ENCODE measurements at regions of chr1 and their contacts with region 1.

Region 1: DNA sequence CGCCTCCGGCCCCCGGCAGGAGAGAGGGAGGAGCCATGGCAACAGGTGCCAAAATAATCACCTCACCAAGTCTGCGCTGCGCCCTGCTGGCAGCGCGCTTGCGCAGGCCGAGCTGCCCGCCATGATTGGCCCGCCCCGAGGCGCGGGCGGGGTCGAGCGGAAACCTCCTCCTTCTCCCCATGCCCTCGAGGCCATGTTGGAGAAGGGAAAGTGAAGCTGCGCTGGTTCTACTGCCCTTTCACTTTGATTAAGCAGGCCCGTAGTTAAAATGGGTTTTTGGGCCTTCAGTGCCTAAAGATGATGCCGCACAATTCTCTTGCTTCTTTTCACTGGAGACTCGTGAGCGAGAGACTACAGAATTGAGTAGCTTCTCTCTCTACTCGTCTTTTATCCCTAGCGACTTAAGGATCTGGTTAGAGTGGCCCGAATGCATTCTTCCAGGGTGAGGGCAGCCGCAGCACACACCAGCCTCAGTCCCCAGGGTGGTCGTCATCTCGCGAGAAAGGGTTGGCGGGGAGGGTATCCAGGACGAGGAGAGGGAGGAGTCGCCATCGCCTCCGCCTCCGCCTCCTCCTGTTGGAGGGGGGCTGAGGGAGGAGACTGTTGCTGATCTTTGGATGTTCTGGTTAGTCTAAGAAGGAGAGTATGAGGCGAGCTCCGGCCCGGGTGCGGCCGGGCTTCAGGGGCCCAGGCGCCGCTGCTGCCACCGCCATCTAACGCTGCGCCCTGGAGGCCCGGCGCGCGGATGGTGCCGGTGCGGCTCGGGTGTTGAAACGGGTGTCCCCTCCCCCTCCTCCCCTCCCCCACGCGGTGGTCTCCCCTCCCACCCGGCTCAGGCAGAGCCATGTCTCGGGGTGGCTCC is at the start of gene DCAF6:
- DNase-seq: peak; percentile 100
- H3K4me3 Mint-ChIP-seq: peak within 1 kb of the TSS; percentile 81
- H3K27ac Mint-ChIP-seq: peak within 1 kb of the TSS; percentile 85
- H3K4me1 Mint-ChIP-seq: peaks cover 18% of the 10 kb centered on the region
- H3K27me3 Mint-ChIP-seq: no peaks in the 10 kb centered on the region
- CTCF ChIP-seq: no peak
- total RNA-seq, gene DCAF6: 57.2 and 60.8 TPM in 2 replicates

Region 2: DNA sequence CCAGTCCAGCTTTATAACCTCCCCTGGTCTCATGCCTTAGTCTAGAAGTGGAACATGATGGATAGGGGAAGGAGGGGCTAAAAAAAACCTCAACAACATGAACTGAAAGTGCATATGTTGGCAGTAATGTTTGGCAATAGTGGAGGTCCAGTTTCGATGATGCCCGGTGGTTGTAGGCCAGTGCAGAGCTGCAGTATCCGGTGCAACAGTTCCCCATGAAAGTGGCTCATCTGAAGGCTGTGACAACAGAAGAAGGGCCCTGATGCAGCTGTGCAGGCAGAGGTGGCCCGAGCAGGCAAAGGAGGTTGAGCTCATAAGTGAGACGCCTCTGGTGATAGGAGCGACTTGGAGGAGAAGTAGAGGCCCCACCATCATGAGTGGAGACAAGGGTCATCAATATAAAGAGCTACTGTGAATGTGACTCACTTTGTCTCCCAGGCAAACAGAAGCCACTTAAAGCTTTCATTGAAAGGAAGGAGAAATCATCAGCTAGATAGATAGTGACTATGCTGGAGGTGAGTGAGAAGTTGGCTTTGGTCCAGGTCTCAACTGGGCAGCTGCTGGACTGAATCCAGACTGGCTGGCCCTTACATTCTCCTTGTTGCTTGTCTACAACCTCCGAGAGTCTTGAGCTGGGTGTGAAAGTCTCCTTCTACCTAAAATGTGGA is 372.6 kb before region 1 on chr1:
- CTCF ChIA-PET with region 1: no interaction called
- POLR2A ChIA-PET with region 1: interaction called, 16 read pairs
- intact Hi-C with region 1: no loop called
- DNase-seq: peak; percentile 79
- H3K4me3 Mint-ChIP-seq: peak overlapping the region; percentile 64
- H3K27ac Mint-ChIP-seq: peak overlapping the region; percentile 85
- H3K4me1 Mint-ChIP-seq: peaks cover 46% of the 10 kb centered on the region
- H3K27me3 Mint-ChIP-seq: no peaks in the 10 kb centered on the region
- CTCF ChIP-seq: no peak

Region 3: DNA sequence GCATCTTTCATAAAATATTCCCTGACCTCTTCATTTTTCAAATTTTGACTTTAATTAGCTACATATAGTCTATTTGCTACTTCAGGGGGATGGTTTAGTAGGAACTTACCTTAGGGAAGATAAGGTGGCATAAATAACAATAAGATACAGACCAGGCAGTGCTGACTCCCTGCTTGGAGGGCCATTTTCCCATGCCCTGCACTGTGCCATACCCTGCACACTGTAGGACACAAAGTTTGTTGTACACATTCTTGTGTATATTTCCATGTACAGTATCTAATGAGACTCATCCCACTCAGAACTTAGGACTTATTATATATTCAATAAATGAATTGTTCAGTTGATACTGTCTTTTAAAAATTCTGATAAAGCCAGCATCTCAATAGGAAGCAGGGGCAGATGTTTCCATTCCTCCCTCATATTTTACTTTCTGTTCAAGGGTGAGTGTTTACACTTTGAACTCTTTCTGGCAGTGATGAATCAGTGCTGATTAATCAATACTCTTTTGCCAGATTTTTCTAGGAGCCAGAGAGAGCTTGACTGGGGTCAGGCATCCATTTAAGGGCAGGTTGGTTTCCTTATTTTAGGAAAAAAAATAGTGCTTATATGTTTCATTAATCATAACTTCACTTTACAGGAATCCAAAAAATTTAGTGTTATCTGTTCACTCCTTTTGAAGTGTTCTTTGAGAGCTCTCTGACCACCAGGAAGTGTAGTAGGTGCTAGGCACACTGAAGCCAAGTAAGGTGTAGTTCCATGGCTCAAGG is 183.9 kb before region 1 on chr1:
- CTCF ChIA-PET with region 1: interaction called, 4 read pairs
- POLR2A ChIA-PET with region 1: interaction called, 13 read pairs
- intact Hi-C with region 1: no loop called
- DNase-seq: peak; percentile 36
- H3K4me3 Mint-ChIP-seq: peak overlapping the region; percentile 40
- H3K27ac Mint-ChIP-seq: peak overlapping the region; percentile 94
- H3K4me1 Mint-ChIP-seq: peaks cover 41% of the 10 kb centered on the region
- H3K27me3 Mint-ChIP-seq: no peaks in the 10 kb centered on the region
- CTCF ChIP-seq: no peak

Region 4: DNA sequence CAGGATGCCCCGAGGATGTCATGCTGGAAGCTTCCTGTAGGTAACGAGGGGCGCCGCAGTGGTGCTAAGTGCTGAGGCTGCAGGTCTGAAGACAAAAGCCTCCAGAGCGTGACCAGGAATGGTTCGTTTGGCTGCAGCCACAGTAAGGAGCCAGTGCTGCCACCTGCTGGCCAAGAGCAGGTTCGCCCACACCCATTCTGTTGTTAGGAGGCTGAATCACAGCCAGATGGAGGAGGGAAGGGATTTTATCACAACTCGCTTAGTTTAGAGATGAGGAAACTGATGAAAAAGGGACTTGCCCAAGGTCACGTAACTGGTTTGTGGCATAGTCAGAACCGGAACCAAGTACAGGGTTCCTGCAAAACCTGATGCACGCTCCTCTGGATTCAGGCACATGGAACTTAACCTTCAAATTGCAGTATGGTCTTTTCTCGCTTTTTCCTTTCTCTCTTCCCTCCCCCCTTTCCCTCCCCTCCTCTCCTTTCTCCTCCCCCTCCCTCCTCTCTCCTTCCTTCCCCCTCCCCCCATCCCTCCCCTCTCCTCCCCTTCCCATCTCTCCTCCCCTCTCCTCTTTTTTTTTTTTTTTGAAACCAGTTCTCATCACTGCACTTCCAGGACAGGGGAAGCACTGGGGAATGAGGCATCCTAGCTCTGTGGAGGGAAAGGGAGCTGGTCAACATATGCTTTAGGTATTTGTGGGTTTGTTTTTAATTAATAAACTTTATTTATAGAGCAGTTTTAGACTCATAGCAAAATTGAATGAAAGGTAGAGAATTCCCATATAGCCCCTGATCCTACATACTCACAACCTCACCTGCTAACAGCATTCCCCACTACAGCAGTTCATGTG is 132.7 kb before region 1 on chr1:
- CTCF ChIA-PET with region 1: interaction called, 3 read pairs
- POLR2A ChIA-PET with region 1: interaction called, 136 read pairs
- intact Hi-C with region 1: no loop called
- DNase-seq: peak; percentile 95
- H3K4me3 Mint-ChIP-seq: peak overlapping the region; percentile 3
- H3K27ac Mint-ChIP-seq: no peak overlapping the region
- H3K4me1 Mint-ChIP-seq: peaks cover 43% of the 10 kb centered on the region
- H3K27me3 Mint-ChIP-seq: no peaks in the 10 kb centered on the region
- CTCF ChIP-seq: peak; percentile 97

Region 5: DNA sequence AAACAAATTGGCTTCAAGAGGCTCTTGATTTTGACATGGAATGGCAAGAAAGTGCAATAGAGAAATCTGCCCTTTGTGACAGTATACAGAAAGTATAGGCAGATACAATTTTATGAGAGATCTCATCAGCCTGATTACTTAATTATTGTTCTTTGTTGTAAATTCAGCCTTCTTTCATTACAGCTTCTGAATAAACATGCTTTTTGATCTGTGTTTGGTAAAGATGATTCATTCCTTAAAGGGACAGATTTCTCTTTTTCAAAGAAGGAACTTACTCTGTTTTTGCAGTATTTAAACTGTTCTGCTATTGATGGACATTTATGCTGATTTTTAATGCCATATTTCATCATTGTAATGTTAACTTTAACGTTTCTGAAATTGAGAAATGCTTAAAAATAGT is 14.3 kb after region 1 on chr1:
- CTCF ChIA-PET with region 1: interaction called, 5 read pairs
- POLR2A ChIA-PET with region 1: interaction called, 21 read pairs
- intact Hi-C with region 1: no loop called
- DNase-seq: no peak
- H3K4me3 Mint-ChIP-seq: no peak overlapping the region
- H3K27ac Mint-ChIP-seq: no peak overlapping the region
- H3K4me1 Mint-ChIP-seq: peaks cover 41% of the 10 kb centered on the region
- H3K27me3 Mint-ChIP-seq: no peaks in the 10 kb centered on the region
- CTCF ChIP-seq: no peak

Region 6: GRCh38 chr1:168187177-168187576 is 250.9 kb after region 1 on chr1:
- CTCF ChIA-PET with region 1: no interaction called
- POLR2A ChIA-PET with region 1: no interaction called
- intact Hi-C with region 1: no loop called
- DNase-seq: no peak
- H3K4me3 Mint-ChIP-seq: no peak overlapping the region
- H3K27ac Mint-ChIP-seq: peak overlapping the region; percentile 4
- H3K4me1 Mint-ChIP-seq: peaks cover 9% of the 10 kb centered on the region
- H3K27me3 Mint-ChIP-seq: no peaks in the 10 kb centered on the region
- CTCF ChIP-seq: no peak

Measured in MCF 10A (cell line).